ENCODE measurements at regions of chr3 and their contacts with region 1.

Region 1: DNA sequence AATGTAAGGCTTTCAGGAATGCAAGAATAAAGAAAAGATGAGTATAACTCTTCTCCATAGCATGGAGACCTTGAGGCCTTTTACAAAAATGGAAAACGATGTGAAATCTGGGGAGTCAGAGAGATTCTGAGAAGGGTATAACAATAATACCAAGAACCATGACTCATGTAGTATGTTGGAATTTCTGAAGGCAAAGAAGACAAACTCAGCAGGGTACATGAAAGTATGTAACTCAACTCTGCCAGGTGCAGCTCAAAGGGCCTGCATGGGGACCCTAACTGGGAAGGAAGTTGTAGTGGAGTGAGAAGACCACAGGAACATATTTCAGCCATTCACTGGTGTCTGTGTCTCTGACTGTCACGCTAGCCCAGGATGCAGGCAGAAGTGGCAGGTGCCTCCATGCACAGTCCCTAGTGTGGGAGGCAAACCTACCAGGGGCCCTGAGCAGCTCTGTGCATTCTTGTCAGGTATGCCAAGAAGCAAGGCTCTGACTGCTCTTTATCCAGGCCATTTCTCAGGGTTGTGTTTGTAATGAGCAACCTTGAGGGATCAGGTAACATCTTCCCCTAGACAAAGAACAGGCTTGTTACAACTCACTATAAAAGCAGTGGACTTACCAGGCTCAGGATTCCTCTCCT is 57.2 kb downstream of the GPR156 start:
- DNase-seq: no peak
- ATAC-seq: no peak
- H3K4me3 ChIP-seq: no peak overlapping the region
- H3K27ac ChIP-seq: no peak overlapping the region
- H3K4me1 ChIP-seq: no peaks in the 10 kb centered on the region
- H3K27me3 ChIP-seq: no peaks in the 10 kb centered on the region
- CTCF ChIP-seq: no peak

Region 2: DNA sequence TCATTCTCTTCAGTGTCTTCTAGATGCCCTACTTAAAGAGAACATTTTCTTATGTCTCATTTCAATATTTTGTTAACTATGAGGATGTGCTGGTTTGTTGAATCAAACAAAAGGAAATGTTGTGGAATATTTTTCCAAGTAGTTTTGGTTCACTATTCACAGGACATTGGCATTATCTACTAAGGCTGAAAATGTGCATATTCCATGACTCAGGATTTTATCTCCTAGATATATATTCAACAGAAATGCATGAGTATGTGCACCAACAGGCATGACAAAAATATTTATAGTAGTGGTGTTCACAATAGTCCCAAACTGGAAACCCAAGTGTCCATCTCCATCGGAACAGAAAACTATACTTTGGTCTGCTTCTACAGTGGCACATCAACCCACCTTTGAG is 462.6 kb before region 1 on chr3:
- CTCF ChIA-PET with region 1: interaction called, 10 read pairs
- POLR2A ChIA-PET with region 1: no interaction called
- in situ Hi-C with region 1: no loop called
- intact Hi-C with region 1: no loop called
- DNase-seq: no peak
- ATAC-seq: no peak
- H3K4me3 ChIP-seq: no peak overlapping the region
- H3K27ac ChIP-seq: no peak overlapping the region
- H3K4me1 ChIP-seq: no peaks in the 10 kb centered on the region
- H3K27me3 ChIP-seq: peaks cover 4% of the 10 kb centered on the region; the same call in 1 of the 2 replicates
- CTCF ChIP-seq: no peak

Region 3: DNA sequence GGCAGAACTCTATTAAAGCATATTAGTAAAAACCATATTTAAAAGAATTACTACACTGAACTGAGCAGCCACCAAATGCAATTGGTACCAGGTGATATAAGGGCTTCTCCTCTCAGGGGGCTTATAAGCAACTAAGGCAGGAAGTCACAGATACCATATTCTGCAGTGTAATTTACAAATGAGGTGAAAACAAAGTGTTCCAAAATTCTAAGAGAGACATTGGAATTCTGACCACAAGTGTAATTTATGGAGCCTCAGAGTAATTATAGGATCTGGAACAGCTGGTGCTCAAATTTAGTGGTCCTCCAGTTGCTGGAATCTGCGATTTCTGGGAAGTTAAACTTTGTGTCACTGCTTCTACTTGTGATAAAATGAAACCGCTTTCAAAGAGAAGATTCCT is 449.0 kb before region 1 on chr3:
- CTCF ChIA-PET with region 1: no interaction called
- POLR2A ChIA-PET with region 1: no interaction called
- in situ Hi-C with region 1: no loop called
- intact Hi-C with region 1: no loop called
- DNase-seq: no peak
- ATAC-seq: no peak
- H3K4me3 ChIP-seq: no peak overlapping the region
- H3K27ac ChIP-seq: no peak overlapping the region
- H3K4me1 ChIP-seq: no peaks in the 10 kb centered on the region
- H3K27me3 ChIP-seq: peaks cover 2% of the 10 kb centered on the region; the same call in 1 of the 2 replicates
- CTCF ChIP-seq: no peak

Region 4: GRCh38 chr3:120263792-120264191 is 36.0 kb after region 1 on chr3:
- CTCF ChIA-PET with region 1: no interaction called
- POLR2A ChIA-PET with region 1: no interaction called
- in situ Hi-C with region 1: no loop called
- intact Hi-C with region 1: no loop called
- DNase-seq: no peak
- ATAC-seq: no peak
- H3K4me3 ChIP-seq: no peak overlapping the region
- H3K27ac ChIP-seq: no peak overlapping the region
- H3K4me1 ChIP-seq: no peaks in the 10 kb centered on the region
- H3K27me3 ChIP-seq: 0 out of 2 replicates have a peak, but pooled peaks cover 2% of the 10 kb centered on the region
- CTCF ChIP-seq: no peak